ENCODE measurements at regions of chr2 and their contacts with region 1.

Region 1: DNA sequence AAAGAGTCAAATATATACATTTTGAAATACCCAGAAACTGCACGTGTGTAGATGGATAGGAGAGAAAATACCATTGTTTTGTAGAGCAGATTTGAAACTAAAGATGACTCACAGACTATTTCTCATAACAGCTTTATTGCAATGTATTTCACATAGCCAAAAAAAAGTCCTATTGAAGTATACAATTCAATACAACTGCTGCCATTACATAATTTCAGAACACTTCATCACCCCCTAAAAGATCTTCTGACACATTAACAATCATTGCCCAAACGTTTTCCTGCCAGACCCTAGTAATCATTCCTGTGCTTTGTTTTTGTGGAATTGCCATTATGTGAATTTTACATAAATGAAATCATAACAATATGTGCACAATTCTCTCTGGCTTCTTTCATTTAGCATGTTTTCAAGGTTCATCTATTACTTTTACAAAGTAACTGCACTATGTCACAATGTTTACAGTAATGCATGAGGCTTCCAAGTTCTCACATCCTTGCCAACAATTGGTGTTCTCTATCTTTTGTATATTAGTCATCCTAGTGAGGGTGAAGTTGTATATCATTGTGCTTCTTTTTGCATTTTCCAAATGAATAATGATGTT is 378.6 kb upstream of the CWC22 start:
- DNase-seq: peak; percentile 90
- ATAC-seq: peak; percentile 83
- H3K4me3 ChIP-seq: no peak overlapping the region
- H3K27ac ChIP-seq: no peak overlapping the region
- H3K4me1 ChIP-seq: no peaks in the 10 kb centered on the region
- H3K27me3 ChIP-seq: no peaks in the 10 kb centered on the region
- CTCF ChIP-seq: no peak
- POLR2A ChIP-seq: no peak
- RAD21 ChIP-seq: no peak

Region 2: DNA sequence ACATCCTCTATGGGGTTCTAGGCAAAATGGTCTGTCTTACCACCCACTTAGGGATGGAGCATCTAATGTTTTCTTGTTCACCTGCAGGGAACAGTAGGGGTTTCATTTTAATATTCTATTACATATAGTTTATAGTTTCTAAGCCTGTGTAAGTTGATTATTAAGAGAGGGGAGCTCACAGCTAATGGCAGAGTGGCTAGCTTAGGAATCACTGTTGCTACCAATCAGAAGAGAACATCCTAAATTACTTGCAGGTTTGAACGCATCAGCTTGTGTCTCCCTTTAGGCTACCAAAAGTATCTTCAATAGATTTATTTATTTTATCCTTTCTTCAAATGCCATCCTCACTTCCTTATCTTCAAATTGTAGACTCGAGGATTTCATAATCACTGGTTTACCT is 51.8 kb after region 1 on chr2:
- CTCF ChIA-PET with region 1: no interaction called
- POLR2A ChIA-PET with region 1: no interaction called
- dilution Hi-C with region 1: no loop called
- in situ Hi-C with region 1: no loop called
- intact Hi-C with region 1: loop called (anchors 5 kb)
- DNase-seq: no peak
- ATAC-seq: no peak
- H3K4me3 ChIP-seq: no peak overlapping the region
- H3K27ac ChIP-seq: no peak overlapping the region
- H3K4me1 ChIP-seq: no peaks in the 10 kb centered on the region
- H3K27me3 ChIP-seq: no peaks in the 10 kb centered on the region
- CTCF ChIP-seq: no peak
- POLR2A ChIP-seq: no peak
- RAD21 ChIP-seq: no peak

Region 3: DNA sequence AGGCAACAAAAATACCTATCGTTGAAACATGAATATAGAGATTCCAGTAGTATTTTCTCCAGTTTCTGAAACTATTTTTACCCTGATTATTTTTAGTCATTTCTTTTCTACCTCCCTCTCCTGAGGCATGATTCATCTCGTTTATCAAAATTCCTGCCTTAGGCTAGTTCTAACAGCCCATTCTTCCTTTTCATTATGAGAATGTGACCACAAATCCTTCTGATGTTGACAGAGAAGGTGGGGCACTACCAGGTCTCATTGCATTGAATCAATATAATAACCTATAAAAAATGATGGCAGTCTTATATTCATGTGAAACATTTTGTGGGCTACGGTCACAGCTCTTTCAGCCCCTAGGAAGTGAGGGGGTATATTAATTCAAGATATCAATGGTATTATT is 188.3 kb after region 1 on chr2:
- CTCF ChIA-PET with region 1: no interaction called
- POLR2A ChIA-PET with region 1: no interaction called
- dilution Hi-C with region 1: no loop called
- in situ Hi-C with region 1: no loop called
- intact Hi-C with region 1: loop called (anchors 10 kb)
- DNase-seq: peak; percentile 37
- ATAC-seq: no peak
- H3K4me3 ChIP-seq: no peak overlapping the region
- H3K27ac ChIP-seq: no peak overlapping the region
- H3K4me1 ChIP-seq: no peaks in the 10 kb centered on the region
- H3K27me3 ChIP-seq: no peaks in the 10 kb centered on the region
- CTCF ChIP-seq: no peak
- POLR2A ChIP-seq: no peak
- RAD21 ChIP-seq: no peak